Dendritic cell treated with granulocyte-macrophage colony-stimulating factor and Interleukin-4, amounts not matched to agents 40 ng/mL and 50 ng/mL, for 4 days (primary cell): ENCODE measurements at regions of chr13 and their contacts with region 1.

Region 1: GRCh38 chr13:32586080-32586900 is at the start of gene PDS5B:
- H3K4me3 Mint-ChIP-seq: peak within 1 kb of the TSS; percentile 92
- H3K27ac Mint-ChIP-seq: peak within 1 kb of the TSS; percentile 89
- H3K4me1 Mint-ChIP-seq: peaks cover 37% of the 10 kb centered on the region
- H3K27me3 Mint-ChIP-seq: peaks cover 8% of the 10 kb centered on the region

Region 2: DNA sequence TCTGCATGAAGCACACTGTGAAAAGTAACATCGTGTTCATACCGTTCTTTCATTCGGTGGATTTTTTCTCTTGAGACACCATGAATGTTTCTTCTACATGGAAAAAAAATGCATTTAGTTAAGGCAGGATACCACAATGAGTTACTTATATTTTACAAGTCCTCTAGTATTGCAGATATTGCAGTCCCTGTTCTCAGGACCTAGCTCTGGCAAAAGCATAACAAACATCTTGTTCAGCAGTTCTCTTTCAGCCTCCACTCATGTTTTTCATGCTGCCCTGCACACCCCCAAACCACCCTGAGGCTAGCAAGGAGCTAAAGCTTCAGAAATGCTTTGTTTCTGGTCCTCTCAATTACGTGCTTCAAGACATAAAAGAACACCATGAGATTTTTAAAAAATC is 183.2 kb before region 1 on chr13:
- intact Hi-C with region 1: no loop called
- H3K4me3 Mint-ChIP-seq: no peak overlapping the region
- H3K27ac Mint-ChIP-seq: no peak overlapping the region
- H3K4me1 Mint-ChIP-seq: no peaks in the 10 kb centered on the region
- H3K27me3 Mint-ChIP-seq: no peaks in the 10 kb centered on the region

Region 3: GRCh38 chr13:32639502-32640105 is 53.3 kb after region 1 on chr13:
- intact Hi-C with region 1: loop called (anchors 1 kb)
- H3K4me3 Mint-ChIP-seq: no peak overlapping the region
- H3K27ac Mint-ChIP-seq: no peak overlapping the region
- H3K4me1 Mint-ChIP-seq: peaks cover 23% of the 10 kb centered on the region
- H3K27me3 Mint-ChIP-seq: no peaks in the 10 kb centered on the region

Region 4: GRCh38 chr13:32669030-32669646 is 82.8 kb after region 1 on chr13:
- intact Hi-C with region 1: loop called (anchors 2 kb)
- H3K4me3 Mint-ChIP-seq: no peak overlapping the region
- H3K27ac Mint-ChIP-seq: no peak overlapping the region
- H3K4me1 Mint-ChIP-seq: no peaks in the 10 kb centered on the region
- H3K27me3 Mint-ChIP-seq: no peaks in the 10 kb centered on the region

Region 5: GRCh38 chr13:32737111-32737571 is 150.9 kb after region 1 on chr13:
- intact Hi-C with region 1: loop called (anchors 5 kb)
- H3K4me3 Mint-ChIP-seq: peak overlapping the region; percentile 40
- H3K27ac Mint-ChIP-seq: peak overlapping the region; percentile 31
- H3K4me1 Mint-ChIP-seq: peaks cover 20% of the 10 kb centered on the region
- H3K27me3 Mint-ChIP-seq: no peaks in the 10 kb centered on the region